Activated CD4-positive, alpha-beta T cell treated with anti-CD3 and anti-CD28 coated beads for 36 hours (primary cell): ENCODE measurements at regions of chr5 and their contacts with region 1.

Region 1: GRCh38 chr5:114449860-114450421 is 88.1 kb downstream of the KCNN2 start:
- DNase-seq: peak; percentile 76
- ATAC-seq: peak; percentile 92
- H3K4me3 Mint-ChIP-seq: no peak overlapping the region
- H3K27ac Mint-ChIP-seq: no peak overlapping the region
- H3K4me1 Mint-ChIP-seq: peaks cover 2% of the 10 kb centered on the region
- H3K27me3 Mint-ChIP-seq: peaks cover 7% of the 10 kb centered on the region

Region 2: GRCh38 chr5:114101153-114101552 is 348.8 kb before region 1 on chr5:
- CTCF ChIA-PET with region 1: interaction called, 3 read pairs
- POLR2A ChIA-PET with region 1: no interaction called
- intact Hi-C with region 1: loop called in 1 of 2 experiments (anchors 2 kb)
- DNase-seq: peak; percentile 13
- ATAC-seq: no peak
- H3K4me3 Mint-ChIP-seq: no peak overlapping the region
- H3K27ac Mint-ChIP-seq: no peak overlapping the region
- H3K4me1 Mint-ChIP-seq: no peaks in the 10 kb centered on the region
- H3K27me3 Mint-ChIP-seq: no peaks in the 10 kb centered on the region

Region 3: DNA sequence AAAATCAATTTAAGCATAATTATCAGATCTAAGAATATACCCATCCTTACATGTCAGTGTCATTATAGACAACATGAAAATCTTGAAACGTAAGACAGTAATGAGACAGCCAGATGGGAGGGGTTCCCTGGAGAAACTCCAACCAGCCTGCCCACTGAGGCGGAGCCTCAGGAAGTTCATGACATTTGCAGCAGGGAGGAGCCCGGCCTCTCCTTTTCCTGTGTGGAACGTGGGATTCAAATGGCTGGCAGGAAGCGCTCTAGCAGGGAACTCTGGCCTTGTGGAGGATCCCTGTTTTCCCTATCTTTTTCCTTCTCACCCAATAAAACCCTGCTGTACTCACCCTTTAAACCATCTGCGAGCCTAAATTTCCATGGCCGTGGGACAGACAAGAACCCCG is 264.7 kb before region 1 on chr5:
- CTCF ChIA-PET with region 1: no interaction called
- POLR2A ChIA-PET with region 1: no interaction called
- intact Hi-C with region 1: no loop called
- DNase-seq: no peak
- ATAC-seq: no peak
- H3K4me3 Mint-ChIP-seq: no peak overlapping the region
- H3K27ac Mint-ChIP-seq: no peak overlapping the region
- H3K4me1 Mint-ChIP-seq: no peaks in the 10 kb centered on the region
- H3K27me3 Mint-ChIP-seq: no peaks in the 10 kb centered on the region

Region 4: DNA sequence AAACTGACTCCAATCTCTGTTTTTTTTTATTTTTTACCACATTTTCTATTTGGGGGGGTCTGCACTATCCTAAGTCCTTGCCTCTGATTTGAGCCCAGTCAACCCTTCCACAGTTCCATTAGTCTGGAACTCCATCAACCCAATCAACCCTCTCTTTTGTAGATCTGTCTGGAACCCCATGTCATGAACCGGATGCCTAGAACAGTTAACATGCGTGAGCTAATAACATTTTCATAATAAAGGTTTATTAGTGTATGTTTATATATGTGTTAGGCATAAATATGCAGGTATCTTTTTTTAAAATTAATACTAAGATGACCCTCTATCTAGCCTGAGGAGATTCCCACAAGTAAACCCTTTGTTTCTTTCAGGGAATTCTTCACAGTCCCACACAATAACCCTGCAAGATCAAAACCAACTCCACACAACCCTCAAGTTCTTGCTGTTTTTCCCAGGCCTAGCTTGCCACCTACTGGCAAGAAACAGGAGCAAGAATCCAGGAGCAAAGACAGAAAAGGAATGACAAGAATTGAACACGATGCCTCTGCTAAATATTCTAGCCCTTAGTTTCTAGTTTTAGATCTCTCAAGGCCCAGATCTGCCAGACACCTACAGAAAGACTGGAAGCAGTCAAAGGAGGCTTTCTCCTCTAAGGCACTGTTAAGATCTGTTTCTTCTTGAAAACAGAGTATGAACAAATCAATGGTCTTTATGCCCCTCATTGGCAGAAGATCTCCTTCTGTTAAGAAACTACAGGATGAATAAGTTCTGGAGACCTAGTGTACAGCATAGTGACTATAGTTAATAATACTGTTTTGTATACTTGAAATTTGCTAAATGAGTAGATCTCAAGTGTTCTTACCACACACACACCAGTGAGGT is 619.4 kb after region 1 on chr5:
- CTCF ChIA-PET with region 1: no interaction called
- POLR2A ChIA-PET with region 1: no interaction called
- intact Hi-C with region 1: loop called in 1 of 2 experiments (anchors 5 kb)
- DNase-seq: peak; percentile 35
- ATAC-seq: peak; percentile 20
- H3K4me3 Mint-ChIP-seq: no peak overlapping the region
- H3K27ac Mint-ChIP-seq: peak overlapping the region; percentile 55
- H3K4me1 Mint-ChIP-seq: peaks cover 18% of the 10 kb centered on the region
- H3K27me3 Mint-ChIP-seq: peaks cover 28% of the 10 kb centered on the region